ENCODE measurements at regions of chr17 and their contacts with region 1.

Region 1: DNA sequence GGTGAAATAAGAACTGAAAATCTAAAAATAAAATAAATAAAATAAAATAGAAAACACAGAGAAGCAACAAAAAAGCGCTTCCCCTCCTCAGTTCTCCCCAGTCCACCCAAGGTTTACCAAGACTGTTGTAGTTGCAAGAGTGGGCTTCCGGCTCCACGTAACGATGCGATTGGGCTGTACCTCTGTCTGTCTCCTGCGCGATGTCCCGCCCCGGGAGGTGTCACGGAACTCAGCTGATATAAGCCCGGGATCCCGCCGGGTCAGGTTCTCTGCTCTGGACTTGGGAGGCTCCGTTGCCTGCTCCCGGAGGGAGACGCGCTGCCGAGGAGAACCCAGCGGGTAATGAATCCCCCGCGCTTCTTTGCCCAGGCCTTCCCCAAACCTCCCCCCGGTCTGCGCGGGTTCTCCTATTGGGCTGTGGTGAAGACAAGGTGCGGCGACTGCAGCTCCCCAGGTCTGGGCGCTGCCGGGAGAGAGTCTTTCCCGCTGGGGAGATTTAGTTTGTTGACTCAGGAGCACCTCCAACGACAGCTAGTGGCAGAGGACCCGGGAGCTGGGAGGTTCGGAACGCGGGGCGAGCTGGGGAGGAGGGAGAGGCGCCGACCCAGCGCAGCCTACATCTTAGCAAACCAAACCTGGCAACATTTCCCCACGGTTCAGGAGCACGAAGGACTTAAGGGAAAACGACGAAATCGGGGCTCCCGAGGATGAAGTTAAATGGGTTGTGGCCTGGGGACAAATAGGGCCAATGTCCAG is at the start of gene SLFN5:
- DNase-seq: peak; percentile 88
- ATAC-seq: peak; percentile 84
- H3K4me3 Mint-ChIP-seq: peak within 1 kb of the TSS; percentile 97
- H3K27ac Mint-ChIP-seq: peak within 1 kb of the TSS; percentile 94
- H3K4me1 Mint-ChIP-seq: peaks cover 25% of the 10 kb centered on the region
- H3K27me3 Mint-ChIP-seq: no peaks in the 10 kb centered on the region
- CTCF ChIP-seq: no peak
- total RNA-seq, gene SLFN5: 15.2 and 15.3 TPM in 2 replicates

Region 2: GRCh38 chr17:34980681-34981537 is 262.1 kb before region 1 on chr17:
- CTCF ChIA-PET with region 1: no interaction called
- POLR2A ChIA-PET with region 1: interaction called, 3 read pairs
- intact Hi-C with region 1: loop called (anchors 5 kb)
- DNase-seq: peak; percentile 92
- ATAC-seq: peak; percentile 91
- H3K4me3 Mint-ChIP-seq: peak overlapping the region; percentile 88
- H3K27ac Mint-ChIP-seq: peak overlapping the region; percentile 87
- H3K4me1 Mint-ChIP-seq: peaks cover 32% of the 10 kb centered on the region
- H3K27me3 Mint-ChIP-seq: no peaks in the 10 kb centered on the region
- CTCF ChIP-seq: no peak

Region 3: GRCh38 chr17:35141681-35142466 is 101.1 kb before region 1 on chr17 and contains the start of gene NLE1:
- CTCF ChIA-PET with region 1: no interaction called
- POLR2A ChIA-PET with region 1: interaction called, 3 read pairs
- intact Hi-C with region 1: loop called (anchors 1 kb)
- DNase-seq: peak; percentile 87
- ATAC-seq: peak; percentile 99
- H3K4me3 Mint-ChIP-seq: peak within 1 kb of the TSS; percentile 87
- H3K27ac Mint-ChIP-seq: peak within 1 kb of the TSS; percentile 59
- H3K4me1 Mint-ChIP-seq: peaks cover 14% of the 10 kb centered on the region
- H3K27me3 Mint-ChIP-seq: peaks cover 1% of the 10 kb centered on the region
- CTCF ChIP-seq: no peak
- total RNA-seq, gene NLE1: 22.1 and 26.3 TPM in 2 replicates

Region 4: DNA sequence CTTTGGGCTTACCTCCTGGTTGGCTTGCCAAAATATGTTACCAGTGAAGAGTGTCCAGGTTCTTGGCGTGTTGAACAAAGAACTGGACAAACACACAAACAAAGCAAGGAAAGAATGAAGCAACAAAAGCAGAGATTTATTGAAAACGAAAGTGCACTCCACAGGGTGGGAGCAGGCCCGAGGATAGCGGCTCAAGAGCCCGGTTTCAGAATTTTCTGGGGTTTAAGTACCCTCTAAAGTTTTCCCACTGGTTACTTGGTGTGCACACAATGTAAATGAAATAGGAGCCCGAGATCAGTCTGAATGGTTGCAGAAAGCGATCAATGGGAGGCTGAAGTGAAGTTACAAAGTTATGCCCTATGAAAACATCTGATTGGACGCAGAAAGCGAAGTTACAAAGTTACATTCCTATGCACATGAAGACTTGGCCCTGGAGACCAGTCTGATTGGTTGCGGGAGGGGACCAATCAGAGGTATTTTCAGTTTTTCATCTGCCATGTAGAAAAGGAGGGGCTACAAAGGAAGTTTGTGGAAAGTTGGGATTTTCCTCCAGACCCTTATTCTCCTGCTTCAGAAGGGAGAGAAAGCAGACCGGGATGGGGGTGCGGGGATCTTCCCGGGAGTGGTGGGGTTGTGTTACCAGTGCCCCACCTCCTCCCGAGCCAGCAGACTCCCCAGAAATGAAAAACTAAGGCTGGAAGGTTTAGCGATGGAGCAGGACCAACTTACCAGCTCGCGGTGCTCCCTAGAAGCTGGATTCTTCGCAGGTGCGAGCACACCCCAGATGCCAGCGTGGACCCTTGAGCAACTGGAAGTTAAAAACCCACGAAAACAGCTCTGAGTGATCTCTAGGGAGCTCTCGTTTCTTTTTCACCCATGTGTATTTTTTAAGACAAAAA is 189.4 kb after region 1 on chr17 and contains the start of gene SLFN12:
- CTCF ChIA-PET with region 1: no interaction called
- POLR2A ChIA-PET with region 1: no interaction called
- intact Hi-C with region 1: loop called (anchors 2 kb)
- DNase-seq: peak; percentile 29
- ATAC-seq: peak; percentile 93
- H3K4me3 Mint-ChIP-seq: peak within 1 kb of the TSS; percentile 97
- H3K27ac Mint-ChIP-seq: peak within 1 kb of the TSS; percentile 92
- H3K4me1 Mint-ChIP-seq: peaks cover 31% of the 10 kb centered on the region
- H3K27me3 Mint-ChIP-seq: no peaks in the 10 kb centered on the region
- CTCF ChIP-seq: no peak
- total RNA-seq, gene SLFN12: 8.7 and 9.0 TPM in 2 replicates

Region 5: DNA sequence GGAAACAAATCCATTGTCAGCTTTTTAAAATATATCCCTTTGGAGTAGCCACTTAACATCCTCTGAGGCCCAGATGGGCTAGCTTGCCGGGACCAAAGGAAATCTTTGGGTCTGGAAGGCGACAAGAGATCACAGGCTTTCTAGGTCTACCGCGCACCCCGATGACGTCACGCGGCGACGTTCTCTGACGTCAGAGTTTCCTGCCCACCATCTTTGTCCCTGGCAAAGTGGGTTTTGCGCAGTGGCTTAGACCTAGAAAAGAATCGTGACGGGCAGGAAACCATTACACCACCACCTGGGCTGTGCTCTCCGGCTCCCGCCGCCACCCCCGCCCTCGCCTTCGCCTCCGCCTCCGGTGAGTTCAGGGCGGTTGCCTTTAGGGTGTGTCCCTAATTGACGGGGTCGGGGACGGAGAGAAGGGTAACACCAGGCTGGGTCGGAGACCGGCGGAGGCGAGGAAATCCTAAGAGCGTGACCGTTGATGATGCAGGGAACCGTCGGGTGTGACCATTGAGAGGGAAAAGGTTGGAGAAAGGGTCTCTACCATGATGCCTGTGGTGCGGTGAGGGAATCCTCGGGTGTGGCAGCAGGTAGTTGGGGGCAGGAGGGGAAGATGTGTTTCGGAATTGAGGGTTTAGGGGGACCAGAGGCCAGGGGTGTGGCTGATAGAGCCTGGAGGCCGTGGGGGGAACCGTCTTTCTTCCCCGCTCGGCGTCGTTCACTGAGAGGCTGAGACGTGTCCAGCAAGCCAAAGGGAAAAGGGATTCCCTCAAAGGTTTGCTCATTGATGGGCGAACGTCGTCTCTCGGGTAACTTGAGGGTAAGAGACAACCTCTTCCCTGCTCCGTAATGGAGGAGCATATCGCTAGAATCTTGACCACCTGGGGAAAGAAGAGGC is 344.3 kb after region 1 on chr17 and contains the start of gene AP2B1:
- CTCF ChIA-PET with region 1: no interaction called
- POLR2A ChIA-PET with region 1: interaction called, 4 read pairs
- intact Hi-C with region 1: loop called (anchors 1 kb)
- DNase-seq: peak; percentile 97
- ATAC-seq: peak; percentile 97
- H3K4me3 Mint-ChIP-seq: peak within 1 kb of the TSS; percentile 100
- H3K27ac Mint-ChIP-seq: peak within 1 kb of the TSS; percentile 100
- H3K4me1 Mint-ChIP-seq: peaks cover 32% of the 10 kb centered on the region
- H3K27me3 Mint-ChIP-seq: peaks cover 5% of the 10 kb centered on the region
- CTCF ChIP-seq: no peak
- total RNA-seq, gene AP2B1: 129 and 152 TPM in 2 replicates

Region 6: DNA sequence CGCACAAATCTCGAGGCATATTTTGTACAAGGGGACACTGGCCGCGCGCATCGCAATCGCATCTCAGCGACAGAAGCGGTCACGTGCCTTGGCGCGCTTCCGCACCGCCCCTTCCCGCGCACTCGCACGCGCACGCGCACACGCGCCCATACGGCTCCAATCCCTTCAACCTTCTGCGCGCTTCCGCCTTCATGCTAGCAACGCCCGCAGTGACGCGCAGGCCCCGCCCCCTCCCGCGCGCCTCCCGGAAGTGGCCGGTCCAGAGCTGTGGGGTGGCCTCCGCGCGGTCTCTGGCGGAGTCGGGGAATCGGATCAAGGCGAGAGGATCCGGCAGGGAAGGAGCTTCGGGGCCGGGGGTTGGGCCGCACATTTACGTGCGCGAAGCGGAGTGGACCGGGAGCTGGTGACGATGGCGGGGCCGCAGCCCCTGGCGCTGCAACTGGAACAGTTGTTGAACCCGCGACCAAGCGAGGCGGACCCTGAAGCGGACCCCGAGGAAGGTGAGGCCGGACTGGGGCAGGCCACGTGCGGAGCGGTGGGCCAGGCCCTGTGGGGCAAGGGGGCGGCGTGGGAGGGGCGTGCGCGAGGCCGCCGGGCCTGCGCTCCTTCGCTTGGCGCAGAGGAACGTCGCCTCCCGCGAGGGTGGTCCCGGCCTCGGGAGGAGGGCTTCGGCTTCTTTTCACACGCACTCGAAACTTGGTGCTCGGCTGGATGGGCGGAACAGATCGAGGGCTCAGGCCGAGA is 1705.9 kb after region 1 on chr17 and contains the start of gene AATF:
- CTCF ChIA-PET with region 1: no interaction called
- POLR2A ChIA-PET with region 1: no interaction called
- intact Hi-C with region 1: loop called (anchors 5 kb)
- DNase-seq: peak; percentile 97
- ATAC-seq: peak; percentile 95
- H3K4me3 Mint-ChIP-seq: peak within 1 kb of the TSS; percentile 92
- H3K27ac Mint-ChIP-seq: peak within 1 kb of the TSS; percentile 93
- H3K4me1 Mint-ChIP-seq: peaks cover 49% of the 10 kb centered on the region
- H3K27me3 Mint-ChIP-seq: peaks cover 18% of the 10 kb centered on the region
- CTCF ChIP-seq: no peak
- total RNA-seq, gene AATF: 73.2 and 86.1 TPM in 2 replicates